ENCODE measurements at regions of chr4 and their contacts with region 1.

Region 1: GRCh38 chr4:108849611-108850168 is 86.8 kb upstream of the ETNPPL start:
- DNase-seq: peak; percentile 80
- ATAC-seq: peak; percentile 90
- H3K4me3 ChIP-seq: no peak overlapping the region
- H3K27ac ChIP-seq: peak overlapping the region; percentile 80
- H3K4me1 ChIP-seq: peaks cover 6% of the 10 kb centered on the region
- H3K27me3 ChIP-seq: no peaks in the 10 kb centered on the region
- CTCF ChIP-seq: no peak
- POLR2A ChIP-seq: no peak
- RAD21 ChIP-seq: no peak

Region 2: DNA sequence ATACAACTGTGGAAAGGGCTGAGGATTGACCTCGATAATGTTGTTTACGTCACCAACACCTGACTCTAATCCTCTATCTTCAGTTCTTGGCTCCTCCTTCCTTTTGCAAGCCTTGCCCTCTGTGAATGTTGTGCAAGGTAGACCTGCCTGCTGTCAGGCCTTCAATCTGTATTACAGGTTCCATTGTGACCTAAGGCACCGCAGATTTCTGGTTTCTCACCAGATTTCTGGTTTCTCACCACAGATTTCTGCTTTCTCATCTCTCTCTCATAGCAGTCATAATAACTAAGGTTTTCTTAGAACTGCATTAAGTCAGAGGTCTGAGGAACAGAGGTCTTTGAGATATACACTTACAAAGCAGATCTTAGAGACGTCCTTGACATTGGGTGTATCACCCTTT is 35.4 kb before region 1 on chr4:
- CTCF ChIA-PET with region 1: no interaction called
- POLR2A ChIA-PET with region 1: no interaction called
- dilution Hi-C with region 1: no loop called
- in situ Hi-C with region 1: no loop called
- intact Hi-C with region 1: no loop called
- DNase-seq: no peak
- ATAC-seq: no peak
- H3K4me3 ChIP-seq: no peak overlapping the region
- H3K27ac ChIP-seq: no peak overlapping the region
- H3K4me1 ChIP-seq: no peaks in the 10 kb centered on the region
- H3K27me3 ChIP-seq: peaks cover 3% of the 10 kb centered on the region
- CTCF ChIP-seq: no peak
- POLR2A ChIP-seq: no peak
- RAD21 ChIP-seq: no peak

Region 3: GRCh38 chr4:108887034-108887433 is 37.3 kb after region 1 on chr4:
- CTCF ChIA-PET with region 1: no interaction called
- POLR2A ChIA-PET with region 1: no interaction called
- dilution Hi-C with region 1: no loop called
- in situ Hi-C with region 1: no loop called
- intact Hi-C with region 1: loop called (anchors 2 kb)
- DNase-seq: no peak
- ATAC-seq: no peak
- H3K4me3 ChIP-seq: no peak overlapping the region
- H3K27ac ChIP-seq: no peak overlapping the region
- H3K4me1 ChIP-seq: peaks cover 6% of the 10 kb centered on the region; the same call in 1 of the 2 replicates
- H3K27me3 ChIP-seq: no peaks in the 10 kb centered on the region
- CTCF ChIP-seq: no peak
- POLR2A ChIP-seq: no peak
- RAD21 ChIP-seq: no peak

Region 4: GRCh38 chr4:109046471-109047201 is 196.9 kb after region 1 on chr4:
- CTCF ChIA-PET with region 1: no interaction called
- POLR2A ChIA-PET with region 1: no interaction called
- dilution Hi-C with region 1: no loop called
- in situ Hi-C with region 1: no loop called
- intact Hi-C with region 1: loop called (anchors 10 kb)
- DNase-seq: peak; percentile 84
- ATAC-seq: peak; percentile 96
- H3K4me3 ChIP-seq: peak overlapping the region; percentile 51
- H3K27ac ChIP-seq: peak overlapping the region; percentile 43; the same call in 1 of the 2 replicates
- H3K4me1 ChIP-seq: no peaks in the 10 kb centered on the region; the same call in 1 of the 2 replicates
- H3K27me3 ChIP-seq: no peaks in the 10 kb centered on the region
- CTCF ChIP-seq: no peak
- POLR2A ChIP-seq: no peak
- RAD21 ChIP-seq: no peak

Region 5: GRCh38 chr4:109052821-109053220 is 203.1 kb after region 1 on chr4:
- CTCF ChIA-PET with region 1: no interaction called
- POLR2A ChIA-PET with region 1: interaction called, 19 read pairs
- dilution Hi-C with region 1: no loop called
- in situ Hi-C with region 1: no loop called
- intact Hi-C with region 1: loop called (anchors 10 kb)
- DNase-seq: no peak
- ATAC-seq: no peak
- H3K4me3 ChIP-seq: no peak overlapping the region
- H3K27ac ChIP-seq: no peak overlapping the region
- H3K4me1 ChIP-seq: no peaks in the 10 kb centered on the region
- H3K27me3 ChIP-seq: no peaks in the 10 kb centered on the region
- CTCF ChIP-seq: no peak
- POLR2A ChIP-seq: no peak
- RAD21 ChIP-seq: no peak

Region 6: GRCh38 chr4:109078724-109079123 is 229.0 kb after region 1 on chr4:
- CTCF ChIA-PET with region 1: no interaction called
- POLR2A ChIA-PET with region 1: no interaction called
- dilution Hi-C with region 1: no loop called
- in situ Hi-C with region 1: no loop called
- intact Hi-C with region 1: loop called (anchors 5 kb)
- DNase-seq: peak; percentile 81
- ATAC-seq: peak; percentile 84
- H3K4me3 ChIP-seq: no peak overlapping the region
- H3K27ac ChIP-seq: peak overlapping the region; percentile 7; the same call in 1 of the 2 replicates
- H3K4me1 ChIP-seq: peaks cover 5% of the 10 kb centered on the region
- H3K27me3 ChIP-seq: no peaks in the 10 kb centered on the region
- CTCF ChIP-seq: no peak
- POLR2A ChIP-seq: no peak
- RAD21 ChIP-seq: no peak

Measured in IMR-90 (cell line).